ENCODE measurements at regions of chr18 and their contacts with region 1.

Region 1: GRCh38 chr18:54269893-54270844 is 852 bp downstream of the POLI start:
- DNase-seq: peak; percentile 67
- ATAC-seq: peak; percentile 80
- H3K4me3 ChIP-seq: peak overlapping the region; percentile 68
- H3K27ac ChIP-seq: peak overlapping the region; percentile 83
- H3K4me1 ChIP-seq: peaks cover 12% of the 10 kb centered on the region; the same call in 1 of the 2 replicates
- H3K27me3 ChIP-seq: no peaks in the 10 kb centered on the region
- CTCF ChIP-seq: peak; percentile 67

Region 2: GRCh38 chr18:54173980-54174630 is 96.1 kb before region 1 on chr18:
- CTCF ChIA-PET with region 1: no interaction called
- POLR2A ChIA-PET with region 1: no interaction called
- intact Hi-C with region 1: loop called (anchors 10 kb)
- DNase-seq: no peak
- ATAC-seq: no peak
- H3K4me3 ChIP-seq: no peak overlapping the region
- H3K27ac ChIP-seq: no peak overlapping the region
- H3K4me1 ChIP-seq: no peaks in the 10 kb centered on the region
- H3K27me3 ChIP-seq: no peaks in the 10 kb centered on the region
- CTCF ChIP-seq: no peak